ENCODE measurements at regions of chr2 and their contacts with region 1.

Region 1: GRCh38 chr2:64644177-64645004 is 9.3 kb downstream of the SERTAD2 start:
- DNase-seq: peak in 36 of 42 donors; percentile 30 to 76 (median 58)

Region 2: DNA sequence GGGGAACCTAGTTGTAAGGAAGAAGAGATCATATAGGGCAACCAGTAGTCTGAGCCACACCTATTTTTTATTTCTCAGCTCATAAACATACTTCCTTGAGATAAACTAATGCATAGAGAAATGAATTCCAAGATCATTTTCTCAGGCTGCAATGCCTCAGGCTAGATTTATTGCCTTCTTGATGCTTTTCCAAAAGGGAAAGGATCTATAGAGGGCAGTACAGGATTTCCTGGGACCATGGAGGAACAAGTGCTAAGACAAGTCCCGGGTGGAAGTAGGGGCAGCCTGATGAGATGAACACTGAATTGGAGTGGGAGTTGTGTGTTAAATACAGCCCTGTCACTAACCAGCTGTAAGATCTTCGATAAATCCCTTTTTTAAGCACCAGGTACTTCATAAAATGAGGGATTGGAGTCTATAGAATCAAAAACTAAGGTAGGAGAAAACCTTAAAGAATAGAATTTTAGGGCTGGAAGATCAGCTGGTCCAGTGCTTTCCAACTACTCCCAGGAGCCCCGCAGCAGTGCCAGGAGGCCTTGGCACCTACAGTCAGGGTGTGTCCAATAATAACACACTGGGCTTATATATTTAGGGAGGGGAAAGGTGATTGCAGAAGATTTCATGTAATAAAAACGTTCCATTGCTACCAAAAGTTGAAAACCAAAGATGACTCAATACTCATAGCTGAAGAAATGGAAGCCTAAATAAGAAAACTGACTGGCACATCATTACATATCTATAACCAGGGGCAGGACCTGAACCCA is 48.8 kb before region 1 on chr2:
- intact Hi-C with region 1: loop called (anchors 10 kb)
- DNase-seq: peak in 3 of 42 donors; percentile 29 to 45 (median 42)

Region 3: GRCh38 chr2:64698668-64699444 is 54.5 kb after region 1 on chr2:
- intact Hi-C with region 1: no loop called
- DNase-seq: no peak

Region 4: DNA sequence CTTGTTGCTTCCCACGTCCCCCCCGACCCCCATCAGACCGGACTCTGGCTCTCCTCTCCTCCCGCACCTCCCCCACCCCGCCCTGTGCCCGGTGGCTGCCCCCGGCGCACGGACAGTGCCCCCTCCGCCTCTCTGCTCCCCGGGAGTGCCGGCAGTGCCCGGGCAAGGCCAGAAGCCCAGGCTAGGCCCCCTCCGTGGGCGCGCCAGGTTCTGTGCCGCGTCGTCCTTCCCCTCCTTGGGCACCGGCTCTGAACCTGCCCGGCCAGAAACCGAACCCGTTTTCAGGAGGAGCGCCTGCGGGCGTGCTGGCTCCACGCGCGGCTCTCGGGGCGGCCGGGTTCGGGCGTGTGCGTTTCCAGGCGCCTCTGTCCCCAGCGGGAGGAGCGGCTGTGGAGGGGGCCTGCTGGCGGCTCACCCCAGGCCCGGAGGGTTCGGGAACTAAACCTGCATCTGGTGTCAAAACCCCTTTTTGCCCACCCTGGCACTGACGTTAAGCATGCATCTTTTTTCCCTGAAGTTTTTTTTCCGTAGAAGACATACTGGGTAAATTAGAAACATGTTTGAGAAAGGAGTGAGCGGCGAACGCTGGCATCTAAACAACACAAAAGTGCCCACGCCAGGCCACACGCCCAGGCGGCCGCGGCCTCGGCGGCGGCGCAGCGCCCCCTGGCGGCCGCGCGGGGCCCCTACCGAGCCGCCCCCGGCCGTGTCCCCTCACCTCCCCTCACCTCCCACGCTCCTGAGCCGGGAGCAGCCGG is 220.9 kb after region 1 on chr2:
- intact Hi-C with region 1: loop called (anchors 5 kb)
- DNase-seq: peak; percentile 42 to 87 (median 72)

Region 5: DNA sequence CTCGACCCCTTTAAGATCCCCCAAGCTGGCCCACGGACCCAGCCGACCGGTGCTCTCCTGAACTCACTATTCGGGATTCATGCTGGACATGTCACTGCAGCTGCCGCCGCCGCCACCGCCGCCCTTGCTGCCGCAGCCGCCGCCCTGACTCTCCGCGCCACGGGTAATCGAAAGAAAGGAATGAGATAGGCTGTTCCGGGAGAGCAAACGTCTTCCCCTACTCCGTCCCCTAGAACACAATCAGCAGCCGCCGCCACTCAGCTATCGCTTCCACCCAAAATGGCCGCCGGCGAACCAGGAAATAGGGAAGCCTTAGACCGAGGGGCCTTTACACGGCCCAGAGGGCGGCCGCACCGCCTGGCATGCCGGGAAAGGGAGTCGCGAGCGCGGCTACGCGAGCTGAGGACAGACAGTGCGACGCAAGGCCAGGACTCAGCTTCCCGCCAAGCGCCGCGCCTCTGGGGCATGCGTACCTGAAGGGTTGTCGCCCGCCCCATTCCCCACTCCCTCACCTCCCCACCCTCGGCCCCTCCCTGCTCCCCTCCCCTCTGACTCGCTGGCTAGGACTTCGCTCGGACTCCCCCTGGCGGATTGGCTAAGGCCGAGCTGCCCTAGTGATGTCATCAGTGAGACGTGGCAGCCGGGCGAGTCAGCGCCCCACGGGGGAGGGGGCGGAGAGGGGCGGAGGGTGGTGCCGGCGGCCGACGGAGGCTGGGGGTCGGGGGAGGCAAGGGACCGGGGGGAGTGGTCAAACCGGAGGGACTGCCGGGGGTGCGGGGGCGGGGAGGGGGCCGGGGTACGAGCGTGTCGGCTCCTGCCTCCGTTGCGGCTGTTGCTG is 485.7 kb after region 1 on chr2 and contains the start of gene RAB1A:
- intact Hi-C with region 1: no loop called
- DNase-seq: peak; percentile 98 to 100 (median 99)

Measured in head of caudate nucleus (tissue), 42 donors.